Activated naive CD4-positive, alpha-beta T cell treated with anti-CD3 and anti-CD28 coated beads for 36 hours (primary cell): ENCODE measurements at regions of chr6 and their contacts with region 1.

Region 1: DNA sequence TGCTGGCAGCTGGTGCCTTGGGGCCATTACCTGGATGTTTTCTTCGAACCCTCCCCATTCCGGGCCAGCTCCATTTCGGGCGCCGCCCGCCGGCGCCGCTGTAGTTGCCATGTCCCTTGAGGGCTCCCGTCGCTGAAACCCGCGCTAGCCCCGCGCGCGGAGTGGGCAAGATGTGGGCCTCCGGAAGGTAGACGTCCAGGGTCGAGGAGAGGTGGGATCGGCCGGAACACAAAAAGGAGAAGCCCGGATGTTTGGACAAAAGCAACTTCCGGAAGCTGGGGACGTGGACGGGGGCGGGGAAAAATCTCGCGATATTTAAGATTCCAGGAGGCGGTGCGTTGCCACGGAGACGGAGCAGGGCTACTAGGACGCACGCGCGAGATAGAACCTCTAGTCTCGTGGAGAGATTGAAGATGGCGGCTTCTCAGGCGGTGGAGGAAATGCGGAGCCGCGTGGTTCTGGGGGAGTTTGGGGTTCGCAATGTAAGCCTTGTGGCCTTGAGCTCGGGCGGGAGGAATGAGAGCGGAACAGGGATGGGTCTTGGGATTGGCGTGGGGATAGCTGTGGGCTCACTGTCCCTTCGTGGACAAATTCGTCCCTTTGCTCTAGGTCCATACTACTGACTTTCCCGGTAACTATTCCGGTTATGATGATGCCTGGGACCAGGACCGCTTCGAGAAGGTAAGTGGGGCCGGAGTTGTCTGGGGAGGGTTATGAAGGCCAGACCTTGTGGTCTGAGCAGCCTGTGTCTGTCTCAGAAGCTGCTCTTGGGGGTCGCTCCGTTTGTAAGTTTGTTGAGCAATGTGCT is at the starts of genes POLR1C and YIPF3:
- DNase-seq: peak; percentile 99
- H3K4me3 Mint-ChIP-seq: no peak within 1 kb of the TSS
- H3K27ac Mint-ChIP-seq: no peak within 1 kb of the TSS
- H3K4me1 Mint-ChIP-seq: peaks cover 28% of the 10 kb centered on the region
- H3K27me3 Mint-ChIP-seq: no peaks in the 10 kb centered on the region
- total RNA-seq, gene POLR1C: 47.5 to 50.1 TPM
- total RNA-seq, gene YIPF3: 26.2 to 26.5 TPM

Region 2: DNA sequence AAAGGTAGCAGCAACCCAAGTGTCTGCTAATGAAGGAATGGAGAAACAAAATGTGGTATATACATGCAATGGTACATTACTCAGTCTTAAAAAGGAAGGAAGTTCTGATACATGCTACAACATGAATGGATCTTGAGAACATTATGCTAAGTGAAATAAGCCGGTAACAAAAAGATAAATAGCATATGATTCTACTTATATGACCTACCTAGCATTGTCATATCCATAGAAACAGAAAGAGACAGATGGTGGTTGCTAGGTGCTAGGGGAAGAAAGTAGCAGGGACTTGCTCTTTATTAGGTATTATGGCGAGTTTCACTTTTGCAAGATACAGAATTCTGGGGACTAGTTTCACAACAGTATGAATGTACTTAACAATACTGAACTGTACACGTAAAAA is 906.5 kb before region 1 on chr6:
- CTCF ChIA-PET with region 1: no interaction called
- intact Hi-C with region 1: no loop called
- DNase-seq: no peak
- H3K4me3 Mint-ChIP-seq: no peak overlapping the region
- H3K27ac Mint-ChIP-seq: no peak overlapping the region
- H3K4me1 Mint-ChIP-seq: peaks cover 8% of the 10 kb centered on the region
- H3K27me3 Mint-ChIP-seq: no peaks in the 10 kb centered on the region

Region 3: GRCh38 chr6:42978839-42979522 is 537.9 kb before region 1 on chr6 and contains the start of gene PEX6:
- CTCF ChIA-PET with region 1: no interaction called
- intact Hi-C with region 1: loop called (anchors 5 kb)
- DNase-seq: peak; percentile 97
- H3K4me3 Mint-ChIP-seq: peak within 1 kb of the TSS; percentile 95
- H3K27ac Mint-ChIP-seq: peak within 1 kb of the TSS; percentile 99
- H3K4me1 Mint-ChIP-seq: peaks cover 53% of the 10 kb centered on the region
- H3K27me3 Mint-ChIP-seq: no peaks in the 10 kb centered on the region
- total RNA-seq, gene PEX6: 17.1 to 18.2 TPM

Region 4: GRCh38 chr6:43163899-43164298 is 353.0 kb before region 1 on chr6:
- CTCF ChIA-PET with region 1: no interaction called
- intact Hi-C with region 1: no loop called
- DNase-seq: no peak
- H3K4me3 Mint-ChIP-seq: no peak overlapping the region
- H3K27ac Mint-ChIP-seq: no peak overlapping the region
- H3K4me1 Mint-ChIP-seq: no peaks in the 10 kb centered on the region
- H3K27me3 Mint-ChIP-seq: no peaks in the 10 kb centered on the region

Region 5: GRCh38 chr6:43369174-43370022 is 147.5 kb before region 1 on chr6 and contains the start of gene ZNF318:
- CTCF ChIA-PET with region 1: no interaction called
- intact Hi-C with region 1: loop called (anchors 1 kb)
- DNase-seq: peak; percentile 95
- H3K4me3 Mint-ChIP-seq: peak within 1 kb of the TSS; percentile 87
- H3K27ac Mint-ChIP-seq: peak within 1 kb of the TSS; percentile 90
- H3K4me1 Mint-ChIP-seq: peaks cover 36% of the 10 kb centered on the region
- H3K27me3 Mint-ChIP-seq: no peaks in the 10 kb centered on the region
- total RNA-seq, gene ZNF318: 9.3 to 9.9 TPM

Region 6: DNA sequence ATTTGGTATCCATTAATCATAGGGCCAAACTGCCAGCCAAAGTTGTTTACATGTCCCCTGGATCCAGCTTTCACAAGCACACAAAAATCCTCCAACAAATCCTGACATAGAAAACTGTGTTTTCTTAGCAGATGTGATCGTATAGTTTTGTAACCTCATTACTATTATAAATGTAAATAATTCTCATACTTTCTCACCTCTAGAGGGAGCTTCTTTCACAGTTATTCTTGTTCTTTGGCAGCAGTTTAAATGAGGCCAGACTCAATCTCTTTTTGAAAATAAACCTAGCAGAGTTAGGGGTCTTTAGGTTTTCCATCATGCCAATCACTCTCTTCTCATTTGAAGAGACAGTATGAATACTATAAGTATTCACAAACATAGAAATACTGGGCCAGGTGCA is 130.4 kb before region 1 on chr6:
- CTCF ChIA-PET with region 1: no interaction called
- intact Hi-C with region 1: loop called (anchors 5 kb)
- DNase-seq: no peak
- H3K4me3 Mint-ChIP-seq: no peak overlapping the region
- H3K27ac Mint-ChIP-seq: no peak overlapping the region
- H3K4me1 Mint-ChIP-seq: peaks cover 50% of the 10 kb centered on the region
- H3K27me3 Mint-ChIP-seq: peaks cover 3% of the 10 kb centered on the region

Region 7: DNA sequence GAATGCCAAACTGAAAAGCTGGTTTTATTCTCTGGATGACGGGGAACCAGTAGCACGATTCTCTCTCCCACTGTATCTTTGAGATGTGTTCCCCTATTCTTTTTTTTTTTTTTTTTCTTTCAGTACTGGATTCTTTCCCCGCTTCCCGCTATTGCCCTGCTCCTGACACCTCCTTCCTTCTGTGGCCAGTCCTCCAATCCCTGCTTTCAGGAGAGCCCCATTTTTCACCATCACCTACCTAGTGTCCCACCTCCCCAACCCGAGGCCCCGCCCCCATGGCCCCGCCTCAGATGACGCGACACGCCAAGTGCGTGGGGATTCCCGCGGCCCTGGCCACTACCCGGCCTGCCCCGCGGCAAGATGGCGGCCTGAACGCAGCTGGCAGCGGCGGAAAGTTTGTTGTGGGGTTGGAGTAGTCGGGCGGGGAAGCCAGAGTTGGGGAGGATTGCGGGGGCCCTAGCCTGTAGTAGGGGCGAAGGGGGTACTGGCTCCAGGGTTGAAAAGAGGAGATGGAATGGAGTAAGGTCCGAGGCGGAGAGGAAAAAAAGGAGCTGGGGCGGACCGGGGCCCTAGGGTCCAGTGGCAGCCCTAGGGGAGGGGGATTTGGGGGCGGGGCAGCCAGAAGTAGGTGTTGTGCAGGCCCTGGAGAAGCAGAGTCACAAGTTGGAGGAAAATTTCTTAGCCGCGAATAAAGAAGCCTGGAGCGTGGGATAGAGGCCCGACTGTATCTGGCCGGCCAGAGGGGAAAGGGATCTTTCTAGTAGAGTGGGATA is 39.5 kb before region 1 on chr6 and contains the start of gene TJAP1:
- CTCF ChIA-PET with region 1: no interaction called
- intact Hi-C with region 1: loop called (anchors 1 kb)
- DNase-seq: peak; percentile 98
- H3K4me3 Mint-ChIP-seq: peak within 1 kb of the TSS; percentile 87
- H3K27ac Mint-ChIP-seq: peak within 1 kb of the TSS; percentile 67
- H3K4me1 Mint-ChIP-seq: peaks cover 45% of the 10 kb centered on the region
- H3K27me3 Mint-ChIP-seq: no peaks in the 10 kb centered on the region
- total RNA-seq, gene TJAP1: 23.0 to 24.6 TPM

Region 8: GRCh38 chr6:43575772-43576551 is 59.1 kb after region 1 on chr6 and contains the starts of genes POLH and XPO5:
- CTCF ChIA-PET with region 1: no interaction called
- intact Hi-C with region 1: loop called (anchors 2 kb)
- DNase-seq: peak; percentile 92
- H3K4me3 Mint-ChIP-seq: peak within 1 kb of the TSS; percentile 93
- H3K27ac Mint-ChIP-seq: peak within 1 kb of the TSS; percentile 87
- H3K4me1 Mint-ChIP-seq: peaks cover 48% of the 10 kb centered on the region
- H3K27me3 Mint-ChIP-seq: no peaks in the 10 kb centered on the region
- total RNA-seq, gene POLH: 63.3 to 68.6 TPM
- total RNA-seq, gene XPO5: 74.9 to 93.2 TPM

Region 9: GRCh38 chr6:43604174-43604573 is 87.3 kb after region 1 on chr6:
- CTCF ChIA-PET with region 1: no interaction called
- intact Hi-C with region 1: no loop called
- DNase-seq: no peak
- H3K4me3 Mint-ChIP-seq: no peak overlapping the region
- H3K27ac Mint-ChIP-seq: no peak overlapping the region
- H3K4me1 Mint-ChIP-seq: peaks cover 2% of the 10 kb centered on the region
- H3K27me3 Mint-ChIP-seq: no peaks in the 10 kb centered on the region

Region 10: DNA sequence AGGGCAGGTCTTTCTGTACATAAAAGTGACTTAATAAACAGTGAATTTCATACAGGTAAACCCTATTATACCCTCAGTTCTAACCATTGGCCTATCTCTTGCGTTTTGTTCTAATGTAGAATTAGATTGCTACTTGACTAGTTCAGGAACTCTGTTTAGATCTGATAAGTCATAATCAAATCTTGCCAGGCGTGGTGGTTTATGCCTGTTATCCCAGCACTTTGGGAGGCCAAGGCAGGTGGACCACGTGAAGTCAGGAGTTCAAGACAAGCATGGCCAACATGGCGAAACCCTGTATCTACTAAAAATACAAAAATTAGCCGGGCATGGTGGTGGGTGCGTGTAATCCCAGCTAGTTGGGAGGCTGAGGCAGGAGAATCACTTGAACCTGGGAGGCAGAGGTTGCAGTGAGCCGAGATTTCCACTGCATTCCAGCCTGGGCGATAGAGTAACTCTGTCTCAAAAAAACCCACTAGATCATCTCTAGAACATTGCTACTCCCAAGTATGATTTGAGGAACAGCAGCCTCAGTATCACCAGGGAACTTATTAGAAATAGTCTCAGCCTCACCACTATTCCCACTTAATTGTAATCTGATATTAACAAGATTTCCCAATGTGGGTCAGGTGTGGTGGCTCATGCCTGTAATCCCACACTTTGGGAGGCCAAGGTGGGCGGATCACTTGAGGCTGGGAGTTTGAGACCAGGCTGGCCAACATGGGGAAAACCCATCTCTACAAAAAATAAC is 100.0 kb after region 1 on chr6:
- CTCF ChIA-PET with region 1: no interaction called
- intact Hi-C with region 1: no loop called
- DNase-seq: no peak
- H3K4me3 Mint-ChIP-seq: no peak overlapping the region
- H3K27ac Mint-ChIP-seq: peak overlapping the region; percentile 36
- H3K4me1 Mint-ChIP-seq: no peaks in the 10 kb centered on the region
- H3K27me3 Mint-ChIP-seq: no peaks in the 10 kb centered on the region

Region 11: GRCh38 chr6:44127186-44128019 is 610.5 kb after region 1 on chr6 and contains the starts of genes MRPL14 and TMEM63B:
- CTCF ChIA-PET with region 1: no interaction called
- intact Hi-C with region 1: loop called (anchors 2 kb)
- DNase-seq: peak; percentile 86
- H3K4me3 Mint-ChIP-seq: peak within 1 kb of the TSS; percentile 88
- H3K27ac Mint-ChIP-seq: peak within 1 kb of the TSS; percentile 93
- H3K4me1 Mint-ChIP-seq: peaks cover 41% of the 10 kb centered on the region
- H3K27me3 Mint-ChIP-seq: no peaks in the 10 kb centered on the region
- total RNA-seq, gene MRPL14: 40.9 to 41.0 TPM
- total RNA-seq, gene TMEM63B: 7.8 to 8.3 TPM